Caco-2 (cell line): ENCODE measurements at regions of chr1 and their contacts with region 1.

Region 1: GRCh38 chr1:34786521-34787325 is 5.7 kb downstream of the GJB3 start:
- DNase-seq: peak; percentile 67 to 76
- H3K4me3 ChIP-seq: no peak overlapping the region
- H3K4me3 Mint-ChIP-seq: no peak overlapping the region
- H3K27ac Mint-ChIP-seq: no peak overlapping the region
- H3K4me1 ChIP-seq: peaks cover 4% of the 10 kb centered on the region; the same call in 1 of the 2 replicates
- H3K4me1 Mint-ChIP-seq: peaks cover 6% of the 10 kb centered on the region
- H3K27me3 ChIP-seq: no peaks in the 10 kb centered on the region
- H3K27me3 Mint-ChIP-seq: no peaks in the 10 kb centered on the region
- CTCF ChIP-seq: peak; percentile 55 to 65

Region 2: DNA sequence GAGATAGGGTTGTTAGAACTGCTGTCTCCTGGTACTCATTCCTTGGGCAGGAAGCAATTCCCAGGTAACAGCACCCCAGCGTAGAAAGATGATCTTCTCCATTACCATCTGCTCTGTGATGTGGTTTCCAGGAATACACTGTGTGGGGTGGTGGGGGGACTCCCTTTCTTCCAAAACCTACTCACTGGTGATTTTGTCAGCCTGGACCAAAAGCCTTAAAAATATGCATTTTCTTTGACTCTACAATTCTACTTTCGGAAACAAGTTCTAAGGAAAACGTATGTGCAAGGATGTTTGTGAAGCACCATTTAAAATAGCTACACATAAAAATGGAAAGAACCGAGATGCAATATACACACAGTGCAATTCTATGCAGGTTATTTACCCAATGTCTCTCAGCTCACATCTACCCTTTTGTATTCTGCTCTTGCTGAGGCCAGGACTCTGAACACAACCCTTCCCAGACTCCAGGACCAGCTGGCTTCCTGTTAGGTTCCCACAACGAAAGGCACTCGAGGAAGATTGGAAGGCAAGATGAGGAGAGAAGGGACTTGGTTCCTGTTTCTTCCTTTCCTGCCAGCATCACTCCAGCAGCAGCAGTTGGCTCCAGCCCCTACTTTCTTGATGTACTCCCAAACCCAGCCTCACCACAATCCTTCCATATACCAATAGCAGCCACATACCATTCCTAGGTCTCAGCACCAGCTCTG is 64.9 kb before region 1 on chr1:
- CTCF ChIA-PET with region 1: no interaction called
- POLR2A ChIA-PET with region 1: no interaction called
- intact Hi-C with region 1: no loop called
- DNase-seq: no peak
- H3K4me3 ChIP-seq: no peak overlapping the region
- H3K4me3 Mint-ChIP-seq: no peak overlapping the region
- H3K27ac Mint-ChIP-seq: no peak overlapping the region
- H3K4me1 ChIP-seq: no peaks in the 10 kb centered on the region
- H3K4me1 Mint-ChIP-seq: no peaks in the 10 kb centered on the region
- H3K27me3 ChIP-seq: no peaks in the 10 kb centered on the region
- H3K27me3 Mint-ChIP-seq: peaks cover 19% of the 10 kb centered on the region
- CTCF ChIP-seq: no peak

Region 3: GRCh38 chr1:34770891-34771508 is 15.7 kb before region 1 on chr1:
- CTCF ChIA-PET with region 1: no interaction called
- POLR2A ChIA-PET with region 1: no interaction called
- intact Hi-C with region 1: no loop called
- DNase-seq: no peak
- H3K4me3 ChIP-seq: no peak overlapping the region
- H3K4me3 Mint-ChIP-seq: no peak overlapping the region
- H3K27ac Mint-ChIP-seq: no peak overlapping the region
- H3K4me1 ChIP-seq: no peaks in the 10 kb centered on the region
- H3K4me1 Mint-ChIP-seq: no peaks in the 10 kb centered on the region
- H3K27me3 ChIP-seq: no peaks in the 10 kb centered on the region
- H3K27me3 Mint-ChIP-seq: no peaks in the 10 kb centered on the region
- CTCF ChIP-seq: no peak

Region 4: DNA sequence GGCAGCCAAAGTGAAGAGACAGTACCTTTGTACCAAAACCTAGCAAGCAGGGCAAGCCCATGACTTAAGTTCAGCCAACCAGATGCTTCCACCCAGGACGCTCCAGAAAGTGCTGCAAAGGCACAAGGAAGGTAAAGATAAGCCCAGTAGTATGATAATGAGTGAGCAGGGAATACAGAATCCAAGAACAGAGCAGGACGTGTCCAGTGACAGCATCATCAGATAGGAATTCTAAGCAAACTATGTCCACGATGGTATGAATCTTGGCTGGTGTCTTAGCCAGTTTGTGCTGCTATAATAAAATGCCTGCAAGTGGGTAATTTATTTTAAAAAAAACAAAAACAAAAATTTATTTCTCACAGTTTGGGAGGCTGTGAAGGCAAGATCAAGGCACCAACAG is 19.7 kb after region 1 on chr1:
- CTCF ChIA-PET with region 1: no interaction called
- POLR2A ChIA-PET with region 1: no interaction called
- intact Hi-C with region 1: no loop called
- DNase-seq: no peak
- H3K4me3 ChIP-seq: no peak overlapping the region
- H3K4me3 Mint-ChIP-seq: no peak overlapping the region
- H3K27ac Mint-ChIP-seq: no peak overlapping the region
- H3K4me1 ChIP-seq: peaks cover 22% of the 10 kb centered on the region
- H3K4me1 Mint-ChIP-seq: peaks cover 6% of the 10 kb centered on the region
- H3K27me3 ChIP-seq: no peaks in the 10 kb centered on the region
- H3K27me3 Mint-ChIP-seq: no peaks in the 10 kb centered on the region
- CTCF ChIP-seq: no peak

Region 5: DNA sequence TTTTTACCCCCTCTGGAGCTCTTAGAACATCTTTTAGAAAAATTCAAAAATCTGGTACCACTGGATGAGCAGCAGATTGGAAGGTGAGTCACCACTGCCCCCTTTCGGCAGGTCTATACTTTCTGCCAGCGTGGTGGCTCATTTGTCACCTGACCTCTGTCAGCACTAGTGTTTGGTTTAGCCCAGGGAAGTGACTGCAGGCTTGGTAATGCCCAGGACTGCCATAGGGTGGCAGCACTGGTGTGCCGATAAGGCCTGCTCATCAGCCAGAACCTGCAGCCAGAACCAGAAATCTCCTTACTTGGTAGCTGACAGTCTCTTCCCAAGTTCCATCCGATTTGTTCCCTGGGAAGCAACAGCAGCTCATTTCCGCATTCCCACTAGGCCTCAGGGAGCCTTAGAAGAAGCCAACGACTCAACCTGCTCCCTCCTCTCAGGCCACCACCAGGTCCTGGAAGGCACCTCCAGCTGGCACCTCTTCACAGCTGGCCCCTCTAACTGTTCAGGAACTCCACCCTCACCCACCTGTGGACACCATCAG is 66.0 kb after region 1 on chr1:
- CTCF ChIA-PET with region 1: interaction called, 16 read pairs
- POLR2A ChIA-PET with region 1: no interaction called
- intact Hi-C with region 1: loop called (anchors 1 kb)
- DNase-seq: peak; percentile 88 to 89
- H3K4me3 ChIP-seq: no peak overlapping the region
- H3K4me3 Mint-ChIP-seq: no peak overlapping the region
- H3K27ac Mint-ChIP-seq: no peak overlapping the region
- H3K4me1 ChIP-seq: no peaks in the 10 kb centered on the region
- H3K4me1 Mint-ChIP-seq: no peaks in the 10 kb centered on the region
- H3K27me3 ChIP-seq: no peaks in the 10 kb centered on the region
- H3K27me3 Mint-ChIP-seq: no peaks in the 10 kb centered on the region
- CTCF ChIP-seq: peak; percentile 61 to 74

Region 6: GRCh38 chr1:34885405-34886247 is 98.9 kb after region 1 on chr1:
- CTCF ChIA-PET with region 1: no interaction called
- POLR2A ChIA-PET with region 1: no interaction called
- intact Hi-C with region 1: loop called (anchors 1 kb)
- DNase-seq: peak; percentile 41 to 46
- H3K4me3 ChIP-seq: no peak overlapping the region
- H3K4me3 Mint-ChIP-seq: peak overlapping the region; percentile 64
- H3K27ac Mint-ChIP-seq: no peak overlapping the region
- H3K4me1 ChIP-seq: no peaks in the 10 kb centered on the region
- H3K4me1 Mint-ChIP-seq: no peaks in the 10 kb centered on the region
- H3K27me3 ChIP-seq: no peaks in the 10 kb centered on the region
- H3K27me3 Mint-ChIP-seq: peaks cover 15% of the 10 kb centered on the region
- CTCF ChIP-seq: no peak

Region 7: GRCh38 chr1:35747938-35748702 is 961.4 kb after region 1 on chr1:
- CTCF ChIA-PET with region 1: no interaction called
- POLR2A ChIA-PET with region 1: interaction called, 10 read pairs
- intact Hi-C with region 1: no loop called
- DNase-seq: no peak
- H3K4me3 ChIP-seq: no peak overlapping the region
- H3K4me3 Mint-ChIP-seq: no peak overlapping the region
- H3K27ac Mint-ChIP-seq: no peak overlapping the region
- H3K4me1 ChIP-seq: no peaks in the 10 kb centered on the region
- H3K4me1 Mint-ChIP-seq: no peaks in the 10 kb centered on the region
- H3K27me3 ChIP-seq: no peaks in the 10 kb centered on the region
- H3K27me3 Mint-ChIP-seq: no peaks in the 10 kb centered on the region
- CTCF ChIP-seq: no peak